ENCODE measurements at regions of chr9 and their contacts with region 1.

Region 1: DNA sequence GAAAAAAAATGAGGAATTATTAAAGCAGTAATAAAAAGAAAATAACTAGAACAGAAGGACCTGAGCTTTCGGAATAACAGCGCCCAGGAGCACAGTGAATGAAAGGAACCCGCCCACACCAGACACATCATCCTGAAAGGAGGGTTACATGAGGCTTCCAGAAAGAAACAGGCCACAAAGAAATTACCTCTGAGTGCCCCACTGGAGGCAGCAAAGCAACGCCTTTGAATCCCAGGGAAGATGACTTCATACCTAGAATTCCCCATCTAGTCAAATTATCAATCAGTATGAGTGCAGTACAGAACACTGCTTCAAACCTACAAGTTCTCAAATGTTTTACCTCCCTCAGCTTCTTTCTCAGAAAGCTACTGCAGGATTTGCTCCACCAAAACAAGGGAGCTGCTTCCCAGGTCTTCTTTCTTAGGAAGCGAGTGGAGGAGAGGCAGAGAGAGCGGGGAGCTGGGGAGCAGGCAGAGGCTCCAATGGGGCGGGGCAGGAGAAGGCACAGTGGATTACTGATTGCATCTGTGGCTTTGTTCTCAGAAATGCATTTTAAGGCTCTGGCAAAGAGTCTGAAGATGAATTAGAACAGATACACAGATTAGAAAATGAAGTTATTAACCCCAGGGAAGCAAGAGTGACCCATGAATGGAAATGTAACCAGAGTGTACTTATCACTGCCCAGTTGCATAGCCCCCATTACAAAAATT is 87.1 kb downstream of the SEMA4D start:
- DNase-seq: peak; percentile 86
- H3K4me3 Mint-ChIP-seq: peak overlapping the region; percentile 70
- H3K27ac Mint-ChIP-seq: peak overlapping the region; percentile 91
- H3K4me1 Mint-ChIP-seq: peaks cover 91% of the 10 kb centered on the region
- H3K27me3 Mint-ChIP-seq: no peaks in the 10 kb centered on the region

Region 2: DNA sequence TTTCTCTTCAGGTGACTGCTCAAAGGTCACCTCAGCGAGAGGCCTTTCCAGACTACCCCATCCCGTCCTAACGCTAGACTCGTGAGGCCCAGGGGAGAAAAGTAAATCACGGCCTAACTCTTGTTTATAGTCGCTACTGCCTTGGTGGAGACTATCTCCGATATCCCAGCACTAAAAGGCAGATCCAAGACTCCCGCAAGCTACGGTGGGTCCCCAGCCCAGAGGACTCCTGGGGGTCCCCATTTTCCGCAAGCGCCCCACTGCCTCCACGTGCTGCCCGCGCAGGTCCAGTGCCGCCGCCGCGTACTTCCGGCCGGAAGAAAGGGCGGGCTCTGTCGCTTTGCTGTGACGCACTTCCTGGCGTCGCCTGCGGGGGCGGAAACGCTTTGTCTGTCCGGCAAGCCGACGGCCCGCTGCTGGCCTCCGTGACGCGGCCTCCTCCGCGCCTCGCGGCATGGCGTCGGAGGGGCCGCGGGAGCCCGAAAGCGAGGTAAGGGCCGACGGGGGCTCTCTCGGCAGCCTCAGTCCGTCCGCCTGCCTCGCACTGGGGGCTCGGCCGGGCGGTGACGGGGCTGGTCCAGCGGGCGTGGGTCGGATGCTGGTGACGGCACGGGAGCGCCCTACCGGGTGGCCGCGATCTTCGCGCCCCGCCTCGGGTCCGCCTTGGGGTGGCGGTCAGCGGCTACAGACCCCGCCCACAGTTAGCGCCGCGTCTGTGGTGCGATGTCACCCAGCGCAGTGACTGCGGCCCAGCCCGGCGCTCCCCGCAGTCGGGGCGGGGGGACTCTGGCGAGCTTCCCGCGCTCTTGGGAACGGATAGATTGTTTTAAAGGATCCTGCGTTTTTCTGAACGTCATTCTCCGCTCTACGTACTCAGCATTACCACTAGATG is 92.4 kb before region 1 on chr9 and contains the start of gene SECISBP2:
- CTCF ChIA-PET with region 1: interaction called, 3 read pairs
- POLR2A ChIA-PET with region 1: no interaction called
- intact Hi-C with region 1: loop called (anchors 1 kb)
- DNase-seq: peak; percentile 96
- H3K4me3 Mint-ChIP-seq: peak within 1 kb of the TSS; percentile 85
- H3K27ac Mint-ChIP-seq: peak within 1 kb of the TSS; percentile 97
- H3K4me1 Mint-ChIP-seq: peaks cover 75% of the 10 kb centered on the region
- H3K27me3 Mint-ChIP-seq: no peaks in the 10 kb centered on the region
- total RNA-seq, gene SECISBP2: 34.0 to 34.7 TPM

Region 3: DNA sequence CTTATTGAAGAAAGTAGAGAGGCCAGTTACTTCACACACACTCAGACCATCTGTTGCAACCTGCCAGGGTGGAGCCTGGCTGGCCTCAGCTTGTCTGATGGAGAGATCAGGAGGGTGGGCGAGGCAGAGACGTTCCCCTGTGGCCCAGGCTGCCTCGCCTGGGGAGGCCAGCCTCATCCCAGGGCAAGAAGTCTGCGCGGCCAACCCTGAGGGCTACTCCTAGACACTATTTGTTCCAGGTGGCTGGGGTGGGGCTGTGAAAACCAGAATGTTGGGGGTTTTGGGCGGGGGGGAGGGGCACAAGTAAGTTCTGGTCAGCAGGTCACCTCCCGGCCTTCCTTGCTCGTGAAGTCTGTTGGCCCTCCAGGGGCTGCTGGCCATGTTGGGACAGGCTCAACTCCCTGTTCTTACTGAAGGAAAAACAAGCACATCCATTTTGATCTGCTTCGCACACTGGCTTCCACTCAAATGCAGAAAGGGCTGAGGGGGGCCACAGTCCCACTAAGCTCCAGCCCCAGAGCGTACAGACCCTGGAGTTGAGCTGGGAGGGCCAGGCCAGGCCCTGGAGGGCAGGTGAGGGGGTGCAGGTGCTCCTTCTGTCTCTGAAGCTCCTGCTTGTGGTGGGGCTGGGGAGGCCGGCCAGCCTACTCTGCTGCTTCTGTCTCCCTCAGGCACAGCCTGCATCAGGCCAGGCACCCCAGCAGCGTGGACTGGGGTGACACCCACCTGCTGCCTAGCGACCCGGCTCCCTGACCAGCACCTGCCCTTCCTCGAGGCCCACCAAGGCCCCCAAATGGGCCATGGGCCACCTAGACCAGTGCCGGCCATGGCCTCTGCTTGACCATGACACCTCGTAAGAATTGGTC is 45.9 kb before region 1 on chr9:
- CTCF ChIA-PET with region 1: no interaction called
- POLR2A ChIA-PET with region 1: no interaction called
- intact Hi-C with region 1: no loop called
- DNase-seq: no peak
- H3K4me3 Mint-ChIP-seq: no peak overlapping the region
- H3K27ac Mint-ChIP-seq: no peak overlapping the region
- H3K4me1 Mint-ChIP-seq: peaks cover 5% of the 10 kb centered on the region
- H3K27me3 Mint-ChIP-seq: no peaks in the 10 kb centered on the region

Region 4: GRCh38 chr9:89375191-89375760 is 35.5 kb before region 1 on chr9:
- CTCF ChIA-PET with region 1: no interaction called
- POLR2A ChIA-PET with region 1: no interaction called
- intact Hi-C with region 1: loop called (anchors 5 kb)
- DNase-seq: peak; percentile 49
- H3K4me3 Mint-ChIP-seq: no peak overlapping the region
- H3K27ac Mint-ChIP-seq: peak overlapping the region; percentile 64
- H3K4me1 Mint-ChIP-seq: peaks cover 27% of the 10 kb centered on the region
- H3K27me3 Mint-ChIP-seq: no peaks in the 10 kb centered on the region

Region 5: GRCh38 chr9:89489548-89490530 is 79.0 kb after region 1 on chr9:
- CTCF ChIA-PET with region 1: interaction called, 12 read pairs
- POLR2A ChIA-PET with region 1: interaction called, 3 read pairs
- intact Hi-C with region 1: no loop called
- DNase-seq: peak; percentile 9
- H3K4me3 Mint-ChIP-seq: peak overlapping the region; percentile 39
- H3K27ac Mint-ChIP-seq: peak overlapping the region; percentile 70
- H3K4me1 Mint-ChIP-seq: peaks cover 94% of the 10 kb centered on the region
- H3K27me3 Mint-ChIP-seq: no peaks in the 10 kb centered on the region

Region 6: GRCh38 chr9:89536145-89536574 is 125.4 kb after region 1 on chr9:
- CTCF ChIA-PET with region 1: interaction called, 8 read pairs
- POLR2A ChIA-PET with region 1: interaction called, 3 read pairs
- intact Hi-C with region 1: loop called (anchors 1 kb)
- DNase-seq: no peak
- H3K4me3 Mint-ChIP-seq: peak overlapping the region; percentile 61
- H3K27ac Mint-ChIP-seq: peak overlapping the region; percentile 90
- H3K4me1 Mint-ChIP-seq: peaks cover 81% of the 10 kb centered on the region
- H3K27me3 Mint-ChIP-seq: no peaks in the 10 kb centered on the region